SK-N-SH (cell line): ENCODE measurements at regions of chr10 and their contacts with region 1.

Region 1: GRCh38 chr10:48656241-48656913 is 28.3 kb upstream of the WDFY4 start:
- DNase-seq: peak; percentile 97
- H3K4me3 ChIP-seq: peak overlapping the region; percentile 69 to 71
- H3K27ac ChIP-seq: peak overlapping the region; percentile 69 to 74; a peak in 2 of 4 replicates
- H3K4me1 ChIP-seq: peaks cover 5 to 20% of the 10 kb centered on the region in 2 experiments; a peak in 2 of 4 replicates
- H3K27me3 ChIP-seq: no peaks in the 10 kb centered on the region
- CTCF ChIP-seq: peak; percentile 85
- EP300 ChIP-seq: peak in 1 of 2 experiments; percentile 26; a peak in 1 of 4 replicates
- RAD21 ChIP-seq: peak; percentile 93

Region 2: DNA sequence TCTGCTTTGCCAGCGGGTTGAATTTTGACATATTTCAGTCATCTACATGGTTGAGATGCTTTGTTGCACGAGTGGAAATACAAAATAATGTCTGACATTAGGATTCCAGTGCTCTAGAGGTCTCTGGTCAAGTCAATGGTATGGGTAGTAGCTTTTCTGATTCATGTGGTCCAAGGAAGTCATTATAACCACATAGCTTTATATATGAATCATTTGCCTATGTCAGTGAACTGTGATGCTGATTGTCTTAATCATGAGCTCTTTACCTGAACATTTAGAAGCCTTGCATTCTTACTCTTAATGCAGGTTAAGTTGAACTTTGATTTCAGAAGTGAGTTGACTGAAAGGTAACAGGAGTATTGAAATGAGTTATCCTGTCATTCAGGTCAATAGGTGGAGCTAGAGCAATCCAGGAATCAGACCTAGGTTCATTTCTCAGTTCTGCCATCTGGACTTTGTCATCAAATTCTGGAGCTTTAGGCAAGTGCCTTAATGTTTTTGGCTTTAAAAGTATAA is 346.6 kb before region 1 on chr10:
- CTCF ChIA-PET with region 1: interaction called, 10 read pairs
- POLR2A ChIA-PET with region 1: no interaction called
- DNase-seq: peak; percentile 25
- H3K4me3 ChIP-seq: 0 out of 4 replicates have a peak overlapping the region, but pooled peaks of 1 of the 2 experiments have one; percentile 11
- H3K27ac ChIP-seq: peak overlapping the region in 1 of 2 experiments; percentile 48; a peak in 2 of 4 replicates
- H3K4me1 ChIP-seq: peaks cover 8 to 18% of the 10 kb centered on the region in 2 experiments; a peak in 3 of 4 replicates
- H3K27me3 ChIP-seq: no peaks in the 10 kb centered on the region
- CTCF ChIP-seq: peak; percentile 43
- EP300 ChIP-seq: peak in 1 of 2 experiments; percentile 7; a peak in 1 of 4 replicates
- RAD21 ChIP-seq: peak; percentile 59

Region 3: DNA sequence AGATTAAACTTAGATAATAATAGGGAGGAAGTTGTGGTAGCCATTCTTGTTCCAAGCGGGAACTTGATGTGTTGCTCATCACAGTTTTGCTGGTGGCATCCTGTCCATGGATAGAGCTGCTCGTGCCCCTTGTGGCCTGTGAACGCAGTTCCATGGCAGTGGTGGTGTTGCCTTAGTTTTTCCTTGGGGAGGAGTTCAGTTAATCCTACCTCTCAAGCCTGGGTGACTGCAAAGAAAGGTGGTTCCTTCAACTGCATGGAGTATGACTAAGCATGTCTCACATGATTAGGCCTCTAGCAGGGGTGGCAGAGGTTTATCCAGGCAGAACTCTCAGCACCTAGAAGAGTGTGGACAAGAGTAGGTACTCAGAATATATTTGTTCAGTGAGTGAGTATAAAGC is 250.2 kb before region 1 on chr10:
- CTCF ChIA-PET with region 1: interaction called, 12 read pairs
- POLR2A ChIA-PET with region 1: no interaction called
- DNase-seq: no peak
- H3K4me3 ChIP-seq: no peak overlapping the region
- H3K27ac ChIP-seq: no peak overlapping the region
- H3K4me1 ChIP-seq: peaks cover 0 to 5% of the 10 kb centered on the region in 2 experiments; a peak in 3 of 4 replicates
- H3K27me3 ChIP-seq: no peaks in the 10 kb centered on the region
- CTCF ChIP-seq: no peak; the same call in 1 of the 2 replicates
- EP300 ChIP-seq: no peak
- RAD21 ChIP-seq: no peak

Region 4: DNA sequence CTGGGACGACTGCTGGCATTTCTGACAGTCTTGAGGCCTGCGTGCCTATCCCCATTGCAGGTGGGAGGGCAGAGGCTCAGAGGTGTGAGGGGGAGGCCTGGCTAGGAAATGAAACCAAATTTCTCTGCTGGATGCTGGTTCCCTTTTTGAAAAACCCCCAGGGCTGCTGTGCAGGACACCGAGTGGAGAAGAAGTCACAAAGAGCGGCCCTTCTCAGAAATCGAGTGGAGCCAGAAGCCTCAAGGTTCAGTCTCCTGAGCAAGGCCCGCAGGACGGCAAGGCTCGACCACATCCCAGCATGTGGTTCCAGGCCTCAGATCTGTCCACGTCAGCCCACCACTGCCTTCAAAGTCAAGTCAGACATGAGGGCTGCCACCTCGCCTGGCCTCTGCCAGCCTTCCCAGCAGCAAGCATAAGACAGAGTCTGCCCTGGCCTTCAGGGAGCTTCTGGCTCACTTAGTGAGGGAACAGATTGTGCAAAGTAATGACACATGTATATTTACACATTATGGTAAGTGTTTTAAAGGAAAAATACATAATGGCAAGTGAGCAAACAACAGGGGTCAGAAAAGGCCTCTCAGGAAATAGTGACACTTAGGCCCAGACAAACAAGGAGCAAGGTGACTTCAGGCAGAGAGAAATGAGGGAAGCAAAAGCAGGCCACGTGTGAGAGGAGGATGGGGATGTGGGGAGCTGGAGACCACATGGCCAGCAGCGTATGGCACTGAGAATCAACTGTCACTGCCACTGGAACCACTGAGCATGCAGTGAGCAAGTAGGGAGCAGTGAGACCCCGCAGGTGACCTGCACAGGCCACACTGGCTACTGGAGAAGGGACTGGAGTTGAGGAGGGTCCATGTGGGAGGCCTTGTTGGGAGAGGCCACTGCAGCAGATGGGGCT is 138.2 kb before region 1 on chr10:
- CTCF ChIA-PET with region 1: interaction called, 60 read pairs
- POLR2A ChIA-PET with region 1: no interaction called
- DNase-seq: no peak
- H3K4me3 ChIP-seq: no peak overlapping the region
- H3K27ac ChIP-seq: no peak overlapping the region
- H3K4me1 ChIP-seq: peaks cover 15 to 28% of the 10 kb centered on the region in 2 experiments; a peak in 3 of 4 replicates
- H3K27me3 ChIP-seq: no peaks in the 10 kb centered on the region
- CTCF ChIP-seq: no peak
- EP300 ChIP-seq: no peak
- RAD21 ChIP-seq: no peak

Region 5: DNA sequence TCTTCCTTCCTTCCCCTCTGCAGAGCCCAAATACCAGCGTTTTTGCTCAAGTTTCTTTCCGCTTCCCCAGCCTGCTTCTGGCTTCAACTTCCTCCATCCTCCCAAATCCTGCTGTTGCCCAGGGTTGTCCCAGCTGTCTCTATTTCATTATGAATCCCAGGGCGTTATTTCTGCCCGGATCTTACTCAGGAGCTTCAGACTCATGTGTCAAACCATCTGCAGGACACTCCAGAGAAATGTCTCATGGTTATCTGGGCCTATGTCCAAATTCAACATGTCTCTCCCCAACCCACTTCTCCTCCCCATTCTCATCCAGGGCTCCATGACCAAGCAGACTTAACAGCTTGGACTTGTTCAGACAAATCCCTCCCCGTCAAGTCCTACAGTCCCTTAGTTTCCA is 67.1 kb before region 1 on chr10:
- CTCF ChIA-PET with region 1: interaction called, 34 read pairs
- POLR2A ChIA-PET with region 1: no interaction called
- DNase-seq: no peak
- H3K4me3 ChIP-seq: no peak overlapping the region
- H3K27ac ChIP-seq: peak overlapping the region; percentile 20 to 87
- H3K4me1 ChIP-seq: peaks cover 0 to 28% of the 10 kb centered on the region in 2 experiments; a peak in 3 of 4 replicates
- H3K27me3 ChIP-seq: no peaks in the 10 kb centered on the region
- CTCF ChIP-seq: no peak
- EP300 ChIP-seq: no peak
- RAD21 ChIP-seq: no peak

Region 6: GRCh38 chr10:48670978-48671913 is 14.9 kb after region 1 on chr10:
- CTCF ChIA-PET with region 1: interaction called, 11 read pairs
- POLR2A ChIA-PET with region 1: no interaction called
- DNase-seq: no peak
- H3K4me3 ChIP-seq: no peak overlapping the region
- H3K27ac ChIP-seq: no peak overlapping the region
- H3K4me1 ChIP-seq: no peaks in the 10 kb centered on the region
- H3K27me3 ChIP-seq: no peaks in the 10 kb centered on the region
- CTCF ChIP-seq: no peak
- EP300 ChIP-seq: no peak
- RAD21 ChIP-seq: no peak

Region 7: GRCh38 chr10:49407552-49408137 is 751.3 kb after region 1 on chr10:
- CTCF ChIA-PET with region 1: interaction called, 26 read pairs
- POLR2A ChIA-PET with region 1: no interaction called
- DNase-seq: peak; percentile 83
- H3K4me3 ChIP-seq: no peak overlapping the region; a peak in 1 of 4 replicates
- H3K27ac ChIP-seq: no peak overlapping the region
- H3K4me1 ChIP-seq: peaks cover 0 to 32% of the 10 kb centered on the region in 2 experiments; a peak in 2 of 4 replicates
- H3K27me3 ChIP-seq: peaks cover 21% of the 10 kb centered on the region; the same call in 1 of the 2 replicates
- CTCF ChIP-seq: peak; percentile 89
- EP300 ChIP-seq: no peak
- RAD21 ChIP-seq: peak; percentile 92